Cardiac septum (tissue), 1 donor: ENCODE measurements at regions of chr18 and their contacts with region 1.

Region 1: DNA sequence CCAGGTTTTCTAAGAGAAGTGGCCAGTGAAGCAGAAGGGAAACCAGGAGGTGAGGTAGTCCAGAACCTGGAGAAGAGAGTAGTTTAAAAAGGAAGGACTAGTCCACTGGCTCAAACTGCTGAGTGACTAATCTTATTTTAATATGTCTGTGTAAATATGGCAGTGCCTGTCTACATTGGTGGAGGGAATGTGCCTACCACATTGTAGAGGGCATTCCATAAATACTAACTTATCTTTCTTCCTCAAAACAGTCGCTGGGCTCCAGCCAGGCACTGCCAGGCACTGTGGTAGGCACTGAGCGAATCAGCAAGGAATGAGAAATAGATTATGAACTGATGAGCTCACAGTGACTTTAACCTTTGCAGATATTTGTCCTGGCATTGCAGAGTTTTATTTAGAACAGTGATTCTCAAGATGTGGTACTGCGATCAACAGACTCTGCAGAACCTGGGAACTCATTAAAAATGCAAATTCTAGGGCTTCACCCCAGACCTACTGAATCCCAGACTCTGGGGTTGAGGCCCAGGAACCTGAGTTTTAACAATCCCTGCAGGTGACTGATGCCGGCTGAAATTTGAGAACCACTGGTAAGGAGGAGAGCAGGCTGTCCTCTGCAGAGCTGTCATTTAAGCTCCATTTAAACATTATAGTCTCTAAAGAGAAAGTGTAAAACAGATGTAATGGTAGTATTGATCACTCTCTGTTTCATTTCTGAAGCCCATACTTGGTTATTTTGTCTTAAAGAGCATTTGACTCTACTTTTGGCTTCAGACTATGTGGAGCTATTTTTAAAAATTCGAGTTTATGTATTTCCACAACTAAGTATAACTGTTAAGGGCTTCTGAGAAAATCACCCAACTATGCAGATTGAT is 487.9 kb downstream of the DLGAP1 start:
- DNase-seq: peak; percentile 83

Region 2: GRCh38 chr18:3914833-3915610 is 52.2 kb before region 1 on chr18:
- intact Hi-C with region 1: loop called (anchors 5 kb)
- DNase-seq: no peak

Region 3: DNA sequence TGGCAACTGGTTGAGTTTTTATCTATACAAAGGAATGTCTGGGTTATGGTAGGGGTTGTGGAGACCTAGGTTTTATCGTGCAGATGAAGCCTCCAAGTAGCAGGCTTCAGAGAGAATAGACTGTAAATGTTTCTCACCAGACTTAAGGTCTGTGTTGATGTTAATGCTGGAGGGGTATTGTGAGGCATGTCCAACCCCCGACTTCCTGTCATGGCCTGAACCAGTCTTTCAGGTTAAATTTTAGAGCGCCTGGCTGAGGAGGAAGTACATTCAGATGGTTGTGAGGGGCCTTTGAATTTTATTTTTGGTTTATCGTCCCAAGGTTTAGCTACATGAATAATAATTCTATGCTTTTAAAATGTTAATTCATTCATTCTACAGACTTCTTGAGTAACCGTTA is 52.8 kb after region 1 on chr18:
- intact Hi-C with region 1: no loop called
- DNase-seq: no peak